Thyroid gland (tissue), 4 donors: ENCODE measurements at regions of chr19 and their contacts with region 1.

Region 1: DNA sequence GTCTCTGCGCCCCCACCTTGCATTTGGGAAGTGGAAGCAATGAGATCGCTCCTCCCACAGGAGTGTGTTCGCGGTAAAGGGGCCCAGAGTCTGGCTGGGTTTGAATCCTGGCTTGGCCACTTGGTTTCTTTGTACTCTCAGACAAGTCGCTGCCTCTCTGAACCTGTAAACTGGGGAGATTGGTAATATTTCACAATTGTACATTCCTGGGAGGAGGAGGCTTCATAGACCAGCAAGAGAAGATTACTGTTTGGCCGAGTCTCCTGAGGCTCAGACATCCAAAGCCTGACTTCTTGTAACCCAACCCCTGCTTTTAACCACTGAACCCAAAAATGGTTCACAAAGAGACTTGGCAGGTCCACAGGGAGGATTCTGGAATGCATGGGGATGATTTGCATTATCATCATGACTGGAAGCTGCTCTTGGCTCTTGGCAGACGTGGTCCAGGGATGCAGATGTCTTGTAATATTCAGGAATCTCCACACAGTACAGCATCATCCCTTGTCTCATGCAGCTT is 13.6 kb upstream of the STRN4 start:
- DNase-seq: no peak
- H3K4me3 ChIP-seq: no peak overlapping the region
- H3K27ac ChIP-seq: no peak overlapping the region
- H3K4me1 ChIP-seq: peaks cover 0 to 4% of the 10 kb centered on the region in 2 donors
- H3K27me3 ChIP-seq: no peaks in the 10 kb centered on the region
- CTCF ChIP-seq: no peak
- POLR2A ChIP-seq: no peak

Region 2: GRCh38 chr19:46513461-46514236 is 246.2 kb before region 1 on chr19:
- intact Hi-C with region 1: no loop called
- DNase-seq: peak; percentile 73 to 80
- H3K4me3 ChIP-seq: no peak overlapping the region
- H3K27ac ChIP-seq: no peak overlapping the region
- H3K4me1 ChIP-seq: peaks cover 0 to 4% of the 10 kb centered on the region in 2 donors
- H3K27me3 ChIP-seq: no peaks in the 10 kb centered on the region
- CTCF ChIP-seq: peak; percentile 84 to 100 (median 93)
- POLR2A ChIP-seq: no peak

Region 3: GRCh38 chr19:46840136-46840942 is 80.5 kb after region 1 on chr19:
- intact Hi-C with region 1: loop called (anchors 2 kb)
- DNase-seq: peak; percentile 47 to 52
- H3K4me3 ChIP-seq: no peak overlapping the region
- H3K27ac ChIP-seq: no peak overlapping the region
- H3K4me1 ChIP-seq: peaks cover 5 to 6% of the 10 kb centered on the region in 2 donors
- H3K27me3 ChIP-seq: no peaks in the 10 kb centered on the region
- CTCF ChIP-seq: peak; percentile 30 to 84 (median 79)
- POLR2A ChIP-seq: no peak

Region 4: GRCh38 chr19:46990991-46991676 is 231.3 kb after region 1 on chr19:
- intact Hi-C with region 1: loop called (anchors 5 kb)
- DNase-seq: peak; percentile 80 to 82
- H3K4me3 ChIP-seq: no peak overlapping the region
- H3K27ac ChIP-seq: peak overlapping the region in 2 of 3 donors; percentile 58 to 61
- H3K4me1 ChIP-seq: peaks cover 6 to 15% of the 10 kb centered on the region in 2 donors
- H3K27me3 ChIP-seq: no peaks in the 10 kb centered on the region
- CTCF ChIP-seq: peak; percentile 34 to 90 (median 80)
- POLR2A ChIP-seq: no peak